ENCODE measurements at regions of chr20 and their contacts with region 1.

Region 1: DNA sequence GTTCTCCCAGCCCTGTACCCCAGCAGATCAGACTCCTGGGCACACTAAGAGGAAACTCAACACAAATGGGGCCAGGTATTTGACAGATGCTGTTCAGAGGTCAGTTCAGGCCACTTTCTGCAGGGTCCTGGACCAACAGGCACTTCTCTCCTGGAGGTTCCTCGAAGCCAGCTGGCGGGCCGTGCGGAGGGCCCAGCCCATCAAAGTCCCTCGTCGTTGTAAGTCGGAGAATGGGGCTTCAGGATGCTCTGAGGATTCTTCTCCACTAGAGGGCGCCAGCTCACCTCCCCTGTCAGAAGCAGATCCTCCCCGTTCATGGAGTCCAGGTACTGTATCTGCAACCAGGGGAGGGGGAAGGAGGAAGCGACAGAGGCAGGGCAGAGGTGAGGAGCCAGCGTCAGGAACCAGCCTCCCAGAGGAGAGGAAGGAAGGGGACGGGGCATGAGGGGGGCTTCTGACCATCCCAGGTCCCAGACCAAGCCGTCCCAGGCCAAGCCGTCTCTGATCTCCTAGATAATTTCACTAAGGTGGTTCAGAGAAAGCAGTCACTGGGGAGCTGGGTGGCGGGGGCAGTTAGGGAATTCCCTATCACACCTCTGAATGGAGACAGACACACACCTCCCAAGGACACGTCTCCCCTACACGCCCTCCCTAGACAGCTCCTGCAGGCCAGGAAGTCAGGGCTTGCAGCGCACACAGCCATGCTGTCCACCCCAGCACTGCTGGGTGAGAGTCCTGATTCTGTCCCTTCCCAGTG is 11.7 kb upstream of the FAM83C start:
- DNase-seq: peak; percentile 87
- H3K4me3 ChIP-seq: no peak overlapping the region; a peak in 1 of 4 replicates
- H3K27ac ChIP-seq: peak overlapping the region; percentile 20 to 97; a peak in 3 of 4 replicates
- H3K4me1 ChIP-seq: peaks cover 30 to 57% of the 10 kb centered on the region in 2 experiments; a peak in 3 of 4 replicates
- H3K27me3 ChIP-seq: no peaks in the 10 kb centered on the region
- CTCF ChIP-seq: peak; percentile 89
- EP300 ChIP-seq: no peak; a peak in 1 of 4 replicates
- RAD21 ChIP-seq: peak; percentile 92

Region 2: DNA sequence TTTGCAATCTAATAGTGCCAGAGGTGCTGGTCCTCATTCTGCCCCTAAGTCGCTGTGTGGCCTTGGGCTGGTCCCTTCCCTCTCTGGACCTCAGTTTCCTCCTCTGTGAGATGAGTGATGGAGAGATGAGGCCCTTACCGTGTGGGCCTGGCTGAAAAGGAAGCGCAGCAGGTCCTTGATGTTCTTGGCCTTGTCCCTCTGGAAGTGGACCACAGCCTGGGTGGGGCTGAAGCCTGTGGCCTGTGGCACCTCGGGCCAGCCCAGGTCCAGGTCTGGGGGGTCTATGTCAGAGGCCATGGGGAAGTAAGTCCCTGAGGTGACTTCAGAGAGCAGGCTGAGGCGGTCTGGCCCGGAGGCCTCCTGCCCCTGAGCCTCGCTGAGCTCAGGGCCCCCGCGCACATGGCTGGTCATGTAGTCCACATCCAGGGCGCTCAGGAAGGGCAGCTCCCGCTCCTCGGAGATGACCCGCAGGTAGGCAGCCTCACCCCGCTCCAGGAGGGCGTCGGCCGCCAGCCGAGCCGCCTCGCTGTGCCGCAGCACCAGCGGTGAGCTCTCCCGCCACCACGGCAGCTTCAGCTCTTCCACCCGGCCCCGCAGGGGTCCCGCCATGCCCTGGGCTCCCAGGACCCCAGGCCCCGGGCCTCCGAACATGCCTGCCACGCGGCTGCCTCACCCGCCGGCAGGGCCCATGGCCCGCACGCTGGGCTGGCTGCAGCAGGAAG is 12.1 kb before region 1 on chr20:
- CTCF ChIA-PET with region 1: interaction called, 28 read pairs
- POLR2A ChIA-PET with region 1: no interaction called
- DNase-seq: no peak
- H3K4me3 ChIP-seq: no peak overlapping the region
- H3K27ac ChIP-seq: no peak overlapping the region
- H3K4me1 ChIP-seq: peaks cover 0 to 29% of the 10 kb centered on the region in 2 experiments; a peak in 1 of 4 replicates
- H3K27me3 ChIP-seq: no peaks in the 10 kb centered on the region
- CTCF ChIP-seq: no peak
- EP300 ChIP-seq: no peak
- RAD21 ChIP-seq: no peak

Region 3: GRCh38 chr20:35344354-35344837 is 40.5 kb after region 1 on chr20:
- CTCF ChIA-PET with region 1: interaction called, 19 read pairs
- POLR2A ChIA-PET with region 1: no interaction called
- DNase-seq: peak; percentile 37
- H3K4me3 ChIP-seq: no peak overlapping the region
- H3K27ac ChIP-seq: peak overlapping the region in 1 of 2 experiments; percentile 51; a peak in 2 of 4 replicates
- H3K4me1 ChIP-seq: peaks cover 1 to 12% of the 10 kb centered on the region in 2 experiments; a peak in 3 of 4 replicates
- H3K27me3 ChIP-seq: no peaks in the 10 kb centered on the region
- CTCF ChIP-seq: no peak
- EP300 ChIP-seq: 0 out of 4 replicates have a peak, but pooled peaks of 1 of the 2 experiments have one; percentile 9
- RAD21 ChIP-seq: no peak

Region 4: DNA sequence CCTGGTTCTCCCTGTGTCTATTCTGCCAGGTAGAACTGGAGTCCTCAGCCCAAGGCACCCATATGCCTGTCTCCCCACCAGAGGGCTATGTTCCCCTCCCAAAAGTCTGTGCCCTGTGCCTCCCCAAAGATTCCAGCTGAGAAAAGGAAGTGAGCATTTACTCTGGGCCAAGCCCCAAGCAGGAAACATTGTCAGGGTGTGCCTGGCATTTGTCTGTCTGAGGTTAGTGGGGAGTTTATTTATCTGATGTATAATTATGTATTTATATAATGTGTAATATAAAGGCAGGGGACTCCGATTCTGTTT is 128.5 kb after region 1 on chr20:
- CTCF ChIA-PET with region 1: interaction called, 323 read pairs
- POLR2A ChIA-PET with region 1: interaction called, 5 read pairs
- DNase-seq: no peak
- H3K4me3 ChIP-seq: no peak overlapping the region
- H3K27ac ChIP-seq: no peak overlapping the region
- H3K4me1 ChIP-seq: no peaks in the 10 kb centered on the region
- H3K27me3 ChIP-seq: no peaks in the 10 kb centered on the region
- CTCF ChIP-seq: no peak
- EP300 ChIP-seq: no peak
- RAD21 ChIP-seq: no peak

Region 5: GRCh38 chr20:35454881-35455609 is 151.1 kb after region 1 on chr20 and contains the start of gene CEP250:
- CTCF ChIA-PET with region 1: interaction called, 323 read pairs
- POLR2A ChIA-PET with region 1: interaction called, 7 read pairs
- DNase-seq: peak; percentile 96
- H3K4me3 ChIP-seq: peak within 1 kb of the TSS; percentile 78 to 93
- H3K27ac ChIP-seq: peak within 1 kb of the TSS; percentile 93 to 98
- H3K4me1 ChIP-seq: peaks cover 4 to 32% of the 10 kb centered on the region in 2 experiments; a peak in 3 of 4 replicates
- H3K27me3 ChIP-seq: no peaks in the 10 kb centered on the region
- CTCF ChIP-seq: no peak
- EP300 ChIP-seq: no peak
- RAD21 ChIP-seq: no peak
- polyA plus RNA-seq, gene CEP250: 13.3 and 14.6 TPM in 2 replicates

Measured in SK-N-SH (cell line).